A673 (cell line): ENCODE measurements at regions of chr2 and their contacts with region 1.

Region 1: DNA sequence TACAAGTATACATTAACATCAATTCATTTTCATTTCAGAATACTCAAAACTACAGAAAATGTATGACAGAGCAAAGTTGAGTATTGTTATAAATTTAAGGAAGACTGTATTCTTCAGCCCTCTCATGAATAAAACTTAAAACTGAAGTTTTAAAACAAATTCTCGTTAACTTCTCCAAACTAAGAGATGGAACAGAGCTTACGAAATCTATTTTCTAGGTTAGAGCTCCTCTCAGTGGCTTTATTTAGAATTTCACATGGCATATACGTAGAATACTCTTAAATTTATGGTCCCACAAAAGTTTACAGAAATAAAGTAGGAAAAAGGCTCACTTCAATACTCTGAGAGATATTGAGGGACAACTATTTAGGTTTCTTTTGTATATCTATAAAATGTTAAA is 612.1 kb downstream of the KCNJ3 start:
- DNase-seq: peak; percentile 48
- H3K4me3 ChIP-seq: no peak overlapping the region
- H3K27ac ChIP-seq: no peak overlapping the region
- H3K4me1 ChIP-seq: no peaks in the 10 kb centered on the region
- H3K27me3 ChIP-seq: no peaks in the 10 kb centered on the region
- CTCF ChIP-seq: peak; percentile 66

Region 2: DNA sequence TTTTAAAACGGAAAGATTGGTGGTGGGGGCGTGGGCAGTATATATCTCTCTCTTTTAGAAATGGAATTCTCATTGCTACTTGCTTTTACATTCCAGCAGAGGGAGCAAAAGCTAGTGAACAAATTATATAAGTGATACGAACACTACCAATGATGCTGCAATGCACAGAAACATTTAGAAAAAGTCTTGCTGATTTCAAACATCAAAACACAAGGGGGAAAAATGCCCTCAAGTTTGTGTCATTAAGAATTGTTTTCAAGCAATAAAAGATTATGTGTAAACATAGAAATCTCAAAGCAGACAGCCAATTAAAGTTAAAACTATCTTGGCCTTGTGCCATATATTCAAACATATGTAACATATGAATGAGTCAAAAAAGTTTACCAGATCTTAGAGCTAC is 908.4 kb before region 1 on chr2:
- CTCF ChIA-PET with region 1: no interaction called
- POLR2A ChIA-PET with region 1: no interaction called
- intact Hi-C with region 1: loop called (anchors 1 kb)
- DNase-seq: peak; percentile 74
- H3K4me3 ChIP-seq: no peak overlapping the region
- H3K27ac ChIP-seq: no peak overlapping the region
- H3K4me1 ChIP-seq: no peaks in the 10 kb centered on the region
- H3K27me3 ChIP-seq: no peaks in the 10 kb centered on the region
- CTCF ChIP-seq: peak; percentile 67